CD8-positive, alpha-beta memory T cell (primary cell): ENCODE measurements at regions of chr3 and their contacts with region 1.

Region 1: DNA sequence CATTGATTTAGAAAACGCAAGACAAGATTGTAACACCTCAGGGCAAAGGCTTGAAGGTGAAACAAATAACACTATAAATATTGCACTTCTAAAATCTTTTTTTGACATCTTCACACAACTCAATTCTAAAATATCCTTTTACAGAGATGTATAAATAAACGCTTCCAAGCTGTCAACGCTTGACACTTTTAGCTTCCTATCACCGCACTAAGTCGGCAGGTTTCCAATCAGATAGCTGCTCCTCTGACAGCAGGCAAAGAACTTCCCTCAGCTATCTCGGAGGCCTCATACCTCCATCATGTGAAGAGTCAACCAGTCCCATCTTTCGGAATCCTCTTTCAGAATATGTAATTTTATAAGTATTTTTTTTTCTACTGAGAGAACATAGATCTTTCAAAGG is 71.0 kb downstream of the PCOLCE2 start:
- DNase-seq: no peak
- H3K4me3 ChIP-seq: no peak overlapping the region
- H3K4me3 Mint-ChIP-seq: no peak overlapping the region
- H3K27ac ChIP-seq: no peak overlapping the region
- H3K27ac Mint-ChIP-seq: no peak overlapping the region
- H3K4me1 ChIP-seq: no peaks in the 10 kb centered on the region
- H3K4me1 Mint-ChIP-seq: no peaks in the 10 kb centered on the region
- H3K27me3 ChIP-seq: no peaks in the 10 kb centered on the region
- H3K27me3 Mint-ChIP-seq: peaks cover 6 to 36% of the 10 kb centered on the region in 2 donors

Region 2: DNA sequence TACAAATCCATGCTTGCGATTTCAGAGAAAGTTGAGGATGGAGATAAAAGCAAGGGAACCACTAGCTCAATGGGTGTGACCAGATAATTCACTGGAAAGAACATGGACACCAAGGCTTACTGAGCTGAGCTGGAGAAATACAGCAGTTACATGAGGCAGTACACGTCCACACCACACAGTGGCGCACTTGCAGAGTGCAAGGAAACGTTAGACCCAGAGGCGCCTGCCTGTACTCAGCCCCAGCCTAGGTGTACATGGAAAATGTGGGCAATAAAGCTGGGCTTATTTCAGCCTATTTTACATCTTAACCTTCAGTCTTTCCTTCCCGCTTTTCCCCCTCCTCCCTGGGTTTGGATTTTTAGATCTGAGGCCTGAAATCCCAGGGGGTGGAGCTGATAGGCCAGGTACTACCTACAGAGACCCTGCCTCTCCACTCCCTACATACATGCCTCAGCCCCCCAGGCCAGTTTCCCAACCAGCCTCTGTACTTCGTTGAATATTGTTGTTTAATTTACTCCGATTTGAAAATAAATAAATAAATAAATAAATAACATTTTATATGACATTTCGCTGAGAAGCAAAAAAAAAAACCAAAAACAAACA is 10.9 kb after region 1 on chr3:
- CTCF ChIA-PET with region 1: interaction called, 10 read pairs
- POLR2A ChIA-PET with region 1: no interaction called
- DNase-seq: peak; percentile 14 to 55 (median 15)
- H3K4me3 ChIP-seq: no peak overlapping the region
- H3K4me3 Mint-ChIP-seq: no peak overlapping the region
- H3K27ac ChIP-seq: no peak overlapping the region
- H3K27ac Mint-ChIP-seq: no peak overlapping the region
- H3K4me1 ChIP-seq: no peaks in the 10 kb centered on the region
- H3K4me1 Mint-ChIP-seq: no peaks in the 10 kb centered on the region
- H3K27me3 ChIP-seq: no peaks in the 10 kb centered on the region
- H3K27me3 Mint-ChIP-seq: peaks cover 10 to 25% of the 10 kb centered on the region in 2 donors